RWPE1 (cell line): ENCODE measurements at regions of chr20 and their contacts with region 1.

Region 1: GRCh38 chr20:52025938-52026337 is 165.6 kb downstream of the ZFP64 start:
- DNase-seq: no peak
- H3K27ac ChIP-seq: no peak overlapping the region
- CTCF ChIP-seq: no peak

Region 2: DNA sequence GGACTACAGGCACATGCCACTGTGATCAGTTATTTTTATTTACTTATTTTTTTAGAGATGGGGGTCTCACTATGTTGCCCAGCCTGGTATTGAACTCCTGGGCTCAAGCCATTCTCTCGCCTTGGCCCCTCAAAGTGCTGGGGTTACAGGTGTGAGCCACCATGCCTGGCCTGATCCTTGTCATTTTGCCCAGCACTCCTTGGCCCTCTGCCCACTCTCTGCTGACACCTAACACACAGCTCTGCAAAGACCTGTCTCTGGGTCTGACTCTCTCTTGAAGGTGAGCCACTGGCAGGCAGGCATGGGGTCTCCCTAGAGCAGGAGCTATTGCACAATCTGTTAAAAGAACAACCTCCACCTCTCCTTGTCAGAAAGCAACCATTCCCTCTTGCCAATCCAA is 10.0 kb after region 1 on chr20:
- CTCF ChIA-PET with region 1: no interaction called
- POLR2A ChIA-PET with region 1: no interaction called
- DNase-seq: no peak
- H3K27ac ChIP-seq: no peak overlapping the region
- CTCF ChIP-seq: no peak

Region 3: DNA sequence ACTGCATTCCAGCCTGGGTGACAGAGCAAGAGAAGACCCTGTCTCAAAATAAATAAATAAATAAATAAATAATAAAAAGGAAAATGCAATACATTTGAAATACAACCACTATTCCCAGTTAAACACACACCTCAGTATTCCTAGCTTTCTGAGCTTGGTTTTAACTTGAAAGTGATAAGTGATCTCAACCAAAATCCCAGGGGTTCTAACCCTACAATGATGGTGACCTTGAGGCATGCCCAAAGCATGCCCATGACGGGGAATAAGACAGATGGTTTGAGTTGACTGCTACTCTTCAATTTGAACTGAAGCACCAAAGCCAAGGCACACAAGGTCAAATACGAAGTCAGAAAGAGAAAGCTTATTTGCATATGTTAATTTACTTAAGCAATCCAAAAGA is 68.8 kb after region 1 on chr20:
- CTCF ChIA-PET with region 1: no interaction called
- POLR2A ChIA-PET with region 1: interaction called, 11 read pairs
- DNase-seq: no peak
- H3K27ac ChIP-seq: no peak overlapping the region
- CTCF ChIP-seq: no peak

Region 4: GRCh38 chr20:52110456-52110855 is 84.5 kb after region 1 on chr20:
- CTCF ChIA-PET with region 1: no interaction called
- POLR2A ChIA-PET with region 1: no interaction called
- DNase-seq: no peak
- H3K27ac ChIP-seq: no peak overlapping the region
- CTCF ChIP-seq: no peak